MCF 10A (cell line): ENCODE measurements at regions of chr1 and their contacts with region 1.

Region 1: GRCh38 chr1:115609021-115609420 is 32.7 kb upstream of the VANGL1 start:
- DNase-seq: peak; percentile 9
- H3K4me3 Mint-ChIP-seq: no peak overlapping the region
- H3K27ac Mint-ChIP-seq: no peak overlapping the region
- H3K4me1 Mint-ChIP-seq: peaks cover 12% of the 10 kb centered on the region
- H3K27me3 Mint-ChIP-seq: peaks cover 13% of the 10 kb centered on the region
- CTCF ChIP-seq: no peak

Region 2: GRCh38 chr1:115275212-115275611 is 333.8 kb before region 1 on chr1:
- CTCF ChIA-PET with region 1: no interaction called
- POLR2A ChIA-PET with region 1: no interaction called
- intact Hi-C with region 1: no loop called
- DNase-seq: peak; percentile 48
- H3K4me3 Mint-ChIP-seq: no peak overlapping the region
- H3K27ac Mint-ChIP-seq: no peak overlapping the region
- H3K4me1 Mint-ChIP-seq: no peaks in the 10 kb centered on the region
- H3K27me3 Mint-ChIP-seq: no peaks in the 10 kb centered on the region
- CTCF ChIP-seq: peak; percentile 54

Region 3: GRCh38 chr1:115323376-115324004 is 285.5 kb before region 1 on chr1:
- CTCF ChIA-PET with region 1: no interaction called
- POLR2A ChIA-PET with region 1: no interaction called
- intact Hi-C with region 1: no loop called
- DNase-seq: peak; percentile 24
- H3K4me3 Mint-ChIP-seq: no peak overlapping the region
- H3K27ac Mint-ChIP-seq: no peak overlapping the region
- H3K4me1 Mint-ChIP-seq: peaks cover 6% of the 10 kb centered on the region
- H3K27me3 Mint-ChIP-seq: no peaks in the 10 kb centered on the region
- CTCF ChIP-seq: no peak

Region 4: DNA sequence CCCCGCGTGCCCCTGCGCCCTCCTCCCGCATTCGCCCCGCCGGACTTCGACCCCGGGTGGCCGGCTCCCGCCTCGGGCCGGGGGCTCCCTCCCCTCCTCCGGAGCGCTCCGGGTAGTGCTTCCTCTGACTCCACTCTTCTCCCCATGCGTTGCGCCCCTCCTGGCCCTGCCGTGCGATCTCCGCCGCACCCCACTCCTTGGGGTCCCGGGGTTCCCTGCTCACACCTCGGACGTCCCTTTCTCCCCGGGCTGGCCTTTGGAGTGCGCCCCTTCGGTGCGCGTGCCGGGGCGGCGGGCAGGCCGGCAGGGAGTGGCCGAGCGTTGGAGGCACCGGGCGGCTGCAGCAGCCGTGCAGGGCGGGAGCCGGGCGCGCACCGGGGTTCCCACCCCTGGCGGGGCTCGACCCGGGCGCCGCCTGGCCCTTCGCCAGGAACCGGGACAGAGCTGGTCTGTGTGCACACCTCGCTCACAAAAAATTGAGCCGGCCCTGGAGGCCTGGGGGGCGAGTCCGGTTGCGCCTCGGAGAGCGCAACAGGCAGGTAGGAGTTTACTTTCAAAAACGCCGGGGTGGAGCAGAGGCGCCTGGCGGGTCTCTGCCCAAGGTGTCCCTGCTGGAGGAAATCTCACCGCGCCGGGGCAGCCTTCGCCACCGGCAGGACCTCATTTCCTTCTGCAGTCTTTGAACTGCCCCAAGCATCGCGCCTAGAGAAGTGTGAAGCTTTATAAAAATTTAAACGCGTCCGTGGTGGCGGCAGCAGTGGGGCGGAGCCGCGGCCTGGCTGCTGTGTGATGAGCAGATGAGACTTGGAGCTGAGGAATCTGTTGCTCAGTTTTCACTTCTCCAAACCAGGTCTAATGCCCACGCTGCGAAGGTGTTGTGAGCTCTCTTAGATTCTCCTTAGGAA is 33.4 kb after region 1 on chr1:
- CTCF ChIA-PET with region 1: interaction called, 3 read pairs
- POLR2A ChIA-PET with region 1: interaction called, 10 read pairs
- intact Hi-C with region 1: no loop called
- DNase-seq: peak; percentile 52
- H3K4me3 Mint-ChIP-seq: peak overlapping the region; percentile 68
- H3K27ac Mint-ChIP-seq: peak overlapping the region; percentile 59
- H3K4me1 Mint-ChIP-seq: peaks cover 13% of the 10 kb centered on the region
- H3K27me3 Mint-ChIP-seq: peaks cover 13% of the 10 kb centered on the region
- CTCF ChIP-seq: no peak

Region 5: GRCh38 chr1:115717541-115717940 is 108.5 kb after region 1 on chr1:
- CTCF ChIA-PET with region 1: interaction called, 10 read pairs
- POLR2A ChIA-PET with region 1: no interaction called
- intact Hi-C with region 1: no loop called
- DNase-seq: peak; percentile 67
- H3K4me3 Mint-ChIP-seq: no peak overlapping the region
- H3K27ac Mint-ChIP-seq: no peak overlapping the region
- H3K4me1 Mint-ChIP-seq: peaks cover 7% of the 10 kb centered on the region
- H3K27me3 Mint-ChIP-seq: no peaks in the 10 kb centered on the region
- CTCF ChIP-seq: peak; percentile 42

Region 6: GRCh38 chr1:115771847-115772457 is 162.9 kb after region 1 on chr1:
- CTCF ChIA-PET with region 1: interaction called, 133 read pairs
- POLR2A ChIA-PET with region 1: interaction called, 29 read pairs
- intact Hi-C with region 1: loop called (anchors 1 kb)
- DNase-seq: peak; percentile 94
- H3K4me3 Mint-ChIP-seq: no peak overlapping the region
- H3K27ac Mint-ChIP-seq: peak overlapping the region; percentile 49
- H3K4me1 Mint-ChIP-seq: peaks cover 16% of the 10 kb centered on the region
- H3K27me3 Mint-ChIP-seq: no peaks in the 10 kb centered on the region
- CTCF ChIP-seq: peak; percentile 70